CD4-positive, alpha-beta T cell (primary cell): ENCODE measurements at regions of chr2 and their contacts with region 1.

Region 1: GRCh38 chr2:157898591-157898996 is 22.5 kb upstream of the ACVR1 start:
- DNase-seq: peak in 13 of 14 experiments; percentile 33 to 73 (median 47)
- ATAC-seq: peak; percentile 62
- H3K4me3 ChIP-seq: peak overlapping the region; percentile 24
- H3K4me3 Mint-ChIP-seq: peak overlapping the region; percentile 55
- H3K27ac ChIP-seq: peak overlapping the region; percentile 49 to 76
- H3K27ac Mint-ChIP-seq: peak overlapping the region; percentile 85
- H3K4me1 ChIP-seq: peaks cover 63% of the 10 kb centered on the region
- H3K4me1 Mint-ChIP-seq: peaks cover 74% of the 10 kb centered on the region
- H3K27me3 ChIP-seq: no peaks in the 10 kb centered on the region
- H3K27me3 Mint-ChIP-seq: no peaks in the 10 kb centered on the region
- CTCF ChIP-seq: no peak

Region 2: DNA sequence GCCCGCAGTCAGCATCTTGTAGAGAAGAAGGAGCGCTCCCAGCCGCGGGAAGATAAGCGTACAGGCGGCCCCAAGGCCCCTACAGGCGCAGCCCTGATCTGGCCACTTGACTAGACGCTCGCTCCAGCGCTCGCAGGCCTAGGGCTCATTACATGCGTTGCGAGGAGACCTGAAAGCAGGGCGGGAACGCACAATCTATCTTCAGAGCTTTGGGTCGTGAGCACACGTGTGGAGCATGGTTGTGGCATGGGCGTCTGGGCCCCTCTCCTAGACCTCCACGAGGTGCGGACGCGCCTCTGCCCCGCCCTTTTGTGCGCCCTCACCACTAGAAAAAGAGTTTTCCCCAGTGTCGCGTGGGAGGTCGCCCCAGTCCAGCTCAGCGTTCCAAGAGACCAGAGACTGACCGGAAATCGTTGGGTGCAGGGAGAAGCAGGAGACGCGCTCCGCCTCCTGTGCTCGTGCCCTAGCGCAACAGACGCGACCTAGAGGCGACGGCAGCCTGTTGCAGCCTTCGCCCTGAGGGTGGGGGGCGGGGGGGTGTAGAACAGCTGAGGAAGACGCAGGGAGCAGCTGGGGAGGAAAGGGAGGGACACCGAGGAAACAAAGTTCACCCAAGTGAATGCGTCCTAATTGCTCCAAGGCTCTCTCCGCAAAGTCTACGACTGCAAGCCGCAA is 1578.6 kb before region 1 on chr2:
- CTCF ChIA-PET with region 1: no interaction called
- POLR2A ChIA-PET with region 1: no interaction called
- intact Hi-C with region 1: loop called in 1 of 2 experiments (anchors 10 kb)
- DNase-seq: peak in 2 of 14 experiments; percentile 41 to 45
- ATAC-seq: no peak
- H3K4me3 ChIP-seq: no peak overlapping the region
- H3K4me3 Mint-ChIP-seq: peak overlapping the region; percentile 5
- H3K27ac ChIP-seq: no peak overlapping the region
- H3K27ac Mint-ChIP-seq: no peak overlapping the region
- H3K4me1 ChIP-seq: peaks cover 36% of the 10 kb centered on the region
- H3K4me1 Mint-ChIP-seq: peaks cover 40% of the 10 kb centered on the region
- H3K27me3 ChIP-seq: peaks cover 53 to 73% of the 10 kb centered on the region in 2 experiments
- H3K27me3 Mint-ChIP-seq: peaks cover 87% of the 10 kb centered on the region
- CTCF ChIP-seq: no peak

Region 3: DNA sequence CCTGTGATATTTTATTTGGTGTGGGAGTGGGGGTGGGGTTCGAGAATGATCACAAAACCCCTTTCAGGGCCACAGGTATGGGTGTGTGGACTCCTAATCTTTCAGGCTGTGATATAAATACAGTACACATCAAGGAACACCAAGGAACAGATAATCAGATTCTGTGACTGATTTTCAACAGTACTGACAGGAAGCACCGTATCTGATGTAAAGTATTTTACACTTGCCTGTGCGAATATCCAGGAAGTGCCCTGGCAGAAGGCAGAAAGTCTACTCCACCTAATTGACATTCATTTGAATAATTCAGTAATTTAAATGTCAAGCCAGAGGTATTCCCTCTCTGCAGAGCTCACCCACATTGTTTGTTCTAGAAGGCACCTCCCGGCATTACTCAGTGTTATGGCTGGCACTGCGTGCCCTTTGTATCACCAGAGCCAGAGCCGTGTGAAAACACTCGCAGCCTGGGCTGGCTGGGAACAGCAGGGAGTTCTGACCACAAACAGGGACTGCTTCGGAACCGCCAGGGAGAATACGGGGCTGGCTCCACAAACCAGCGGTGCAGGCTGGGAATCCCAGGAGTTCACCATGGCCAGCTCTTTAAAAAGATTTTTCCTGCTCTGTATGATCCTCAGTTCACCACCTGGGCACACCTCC is 114.3 kb before region 1 on chr2:
- CTCF ChIA-PET with region 1: no interaction called
- POLR2A ChIA-PET with region 1: no interaction called
- intact Hi-C with region 1: loop called in 1 of 2 experiments (anchors 10 kb)
- DNase-seq: peak in 2 of 14 experiments; percentile 7 to 35
- ATAC-seq: peak; percentile 58
- H3K4me3 ChIP-seq: no peak overlapping the region
- H3K4me3 Mint-ChIP-seq: peak overlapping the region; percentile 21
- H3K27ac ChIP-seq: no peak overlapping the region
- H3K27ac Mint-ChIP-seq: peak overlapping the region; percentile 61
- H3K4me1 ChIP-seq: peaks cover 18% of the 10 kb centered on the region
- H3K4me1 Mint-ChIP-seq: peaks cover 56% of the 10 kb centered on the region
- H3K27me3 ChIP-seq: no peaks in the 10 kb centered on the region
- H3K27me3 Mint-ChIP-seq: no peaks in the 10 kb centered on the region
- CTCF ChIP-seq: no peak

Region 4: GRCh38 chr2:157876066-157876787 is 22.4 kb before region 1 on chr2 and contains the start of gene ACVR1:
- CTCF ChIA-PET with region 1: interaction called, 12 read pairs
- POLR2A ChIA-PET with region 1: interaction called, 83 read pairs
- intact Hi-C with region 1: loop called (anchors 1 to 2 kb)
- DNase-seq: peak; percentile 55 to 94 (median 74)
- ATAC-seq: peak; percentile 74
- H3K4me3 ChIP-seq: peak within 1 kb of the TSS; percentile 66
- H3K4me3 Mint-ChIP-seq: peak within 1 kb of the TSS; percentile 99
- H3K27ac ChIP-seq: peak within 1 kb of the TSS; percentile 49 to 70
- H3K27ac Mint-ChIP-seq: peak within 1 kb of the TSS; percentile 85
- H3K4me1 ChIP-seq: peaks cover 35% of the 10 kb centered on the region
- H3K4me1 Mint-ChIP-seq: peaks cover 66% of the 10 kb centered on the region
- H3K27me3 ChIP-seq: no peaks in the 10 kb centered on the region
- H3K27me3 Mint-ChIP-seq: no peaks in the 10 kb centered on the region
- CTCF ChIP-seq: no peak
- total RNA-seq, gene ACVR1: 14.3 to 16.7 TPM

Region 5: GRCh38 chr2:157952558-157952957 is 54.0 kb after region 1 on chr2:
- CTCF ChIA-PET with region 1: no interaction called
- POLR2A ChIA-PET with region 1: no interaction called
- intact Hi-C with region 1: no loop called
- DNase-seq: no peak
- ATAC-seq: no peak
- H3K4me3 ChIP-seq: no peak overlapping the region
- H3K4me3 Mint-ChIP-seq: no peak overlapping the region
- H3K27ac ChIP-seq: no peak overlapping the region
- H3K27ac Mint-ChIP-seq: no peak overlapping the region
- H3K4me1 ChIP-seq: no peaks in the 10 kb centered on the region
- H3K4me1 Mint-ChIP-seq: no peaks in the 10 kb centered on the region
- H3K27me3 ChIP-seq: peaks cover 0 to 2% of the 10 kb centered on the region in 2 experiments
- H3K27me3 Mint-ChIP-seq: no peaks in the 10 kb centered on the region
- CTCF ChIP-seq: no peak

Region 6: DNA sequence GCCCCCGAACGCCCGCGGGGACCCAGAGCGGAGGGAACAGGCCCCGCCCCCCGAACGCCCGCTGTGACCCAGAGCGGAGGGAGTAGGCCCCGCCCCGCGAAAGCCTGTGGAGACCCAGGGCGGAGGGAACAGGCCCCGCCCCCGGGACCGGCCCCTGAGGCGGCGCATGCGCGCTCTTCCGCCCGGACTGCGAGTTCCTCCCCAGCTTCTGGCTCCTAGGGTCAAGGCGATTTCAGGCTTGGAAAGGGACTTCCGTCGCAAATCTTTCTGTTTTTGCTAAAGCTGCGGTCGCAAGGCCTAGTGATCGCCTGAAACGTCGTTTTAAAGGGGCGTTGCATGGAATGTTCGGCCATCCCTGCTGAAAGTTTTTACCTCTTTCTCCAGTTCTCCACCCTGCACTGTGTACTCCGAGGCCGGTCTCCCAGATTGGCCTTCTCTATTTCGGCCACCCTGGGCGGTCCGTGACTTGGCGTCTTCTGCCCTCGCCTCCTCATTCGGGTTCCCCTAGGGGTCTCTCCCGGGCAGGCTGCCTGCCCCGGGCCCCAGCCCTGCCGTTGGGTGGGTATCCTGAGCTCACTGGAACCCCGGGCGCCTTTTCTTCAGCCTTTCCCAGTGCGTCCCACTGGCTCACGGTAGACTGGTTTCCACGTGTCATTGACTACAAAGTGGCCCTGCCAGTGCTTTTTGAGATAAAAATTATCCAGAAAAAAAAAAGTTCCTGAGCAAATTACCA is 1388.3 kb after region 1 on chr2:
- CTCF ChIA-PET with region 1: no interaction called
- POLR2A ChIA-PET with region 1: no interaction called
- intact Hi-C with region 1: loop called in 1 of 2 experiments (anchors 10 kb)
- DNase-seq: peak; percentile 93 to 100 (median 97)
- ATAC-seq: peak; percentile 98
- H3K4me3 ChIP-seq: peak overlapping the region; percentile 88
- H3K4me3 Mint-ChIP-seq: peak overlapping the region; percentile 90
- H3K27ac ChIP-seq: peak overlapping the region in 1 of 2 donors; percentile 69
- H3K27ac Mint-ChIP-seq: peak overlapping the region; percentile 77
- H3K4me1 ChIP-seq: peaks cover 24% of the 10 kb centered on the region
- H3K4me1 Mint-ChIP-seq: peaks cover 46% of the 10 kb centered on the region
- H3K27me3 ChIP-seq: no peaks in the 10 kb centered on the region
- H3K27me3 Mint-ChIP-seq: no peaks in the 10 kb centered on the region
- CTCF ChIP-seq: no peak